Cardiac septum (tissue), 1 donor: ENCODE measurements at regions of chr13 and their contacts with region 1.

Region 1: GRCh38 chr13:80132741-80133601 is 208.0 kb downstream of the SPRY2 start:
- DNase-seq: peak; percentile 80

Region 2: GRCh38 chr13:79631051-79631659 is 501.8 kb before region 1 on chr13:
- intact Hi-C with region 1: loop called (anchors 10 kb)
- DNase-seq: no peak

Region 3: GRCh38 chr13:79662882-79663281 is 470.1 kb before region 1 on chr13:
- intact Hi-C with region 1: loop called (anchors 10 kb)
- DNase-seq: no peak

Region 4: DNA sequence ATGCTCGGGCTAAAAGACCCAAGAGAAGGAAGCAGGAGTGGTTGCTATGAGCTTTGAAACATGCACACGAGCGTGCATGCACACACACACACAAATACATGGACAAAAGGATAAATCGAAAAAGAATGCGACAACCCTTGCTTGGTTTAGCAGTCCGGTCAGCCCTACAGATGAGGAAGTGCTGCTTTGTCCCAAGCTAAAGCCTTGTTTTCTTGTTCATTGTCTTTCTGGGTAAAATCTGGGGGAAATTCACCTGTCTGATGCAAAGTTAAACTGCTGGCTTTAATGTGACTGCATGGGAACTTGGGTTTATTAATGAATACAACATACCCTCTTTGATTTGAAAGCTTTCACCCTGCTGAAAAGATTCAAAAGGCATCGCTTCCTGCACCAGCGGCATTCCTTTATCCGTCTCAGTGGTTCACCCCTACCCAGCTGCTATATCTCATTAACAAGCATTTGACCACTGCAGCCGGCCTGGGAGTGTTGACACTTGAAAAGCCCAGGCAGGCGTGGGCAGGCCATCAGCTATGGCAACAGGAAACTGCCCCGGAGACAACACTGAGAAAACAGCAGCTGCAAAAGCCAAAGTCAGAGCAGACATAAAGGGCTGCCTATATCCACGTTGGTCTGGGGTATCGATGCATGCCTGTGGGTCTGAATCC is 350.3 kb before region 1 on chr13:
- intact Hi-C with region 1: loop called (anchors 10 kb)
- DNase-seq: peak; percentile 83

Region 5: GRCh38 chr13:80048802-80049201 is 84.2 kb before region 1 on chr13:
- intact Hi-C with region 1: loop called (anchors 2 kb)
- DNase-seq: peak; percentile 93

Region 6: GRCh38 chr13:80337288-80338081 is 204.5 kb after region 1 on chr13:
- intact Hi-C with region 1: loop called (anchors 1 kb)
- DNase-seq: no peak